ENCODE measurements at regions of chr5 and their contacts with region 1.

Region 1: GRCh38 chr5:87661784-87662566 is 249.2 kb upstream of the CCNH start:
- DNase-seq: no peak
- H3K4me3 Mint-ChIP-seq: no peak overlapping the region
- H3K27ac Mint-ChIP-seq: no peak overlapping the region
- H3K4me1 Mint-ChIP-seq: no peaks in the 10 kb centered on the region
- H3K27me3 Mint-ChIP-seq: peaks cover 35% of the 10 kb centered on the region
- CTCF ChIP-seq: no peak

Region 2: DNA sequence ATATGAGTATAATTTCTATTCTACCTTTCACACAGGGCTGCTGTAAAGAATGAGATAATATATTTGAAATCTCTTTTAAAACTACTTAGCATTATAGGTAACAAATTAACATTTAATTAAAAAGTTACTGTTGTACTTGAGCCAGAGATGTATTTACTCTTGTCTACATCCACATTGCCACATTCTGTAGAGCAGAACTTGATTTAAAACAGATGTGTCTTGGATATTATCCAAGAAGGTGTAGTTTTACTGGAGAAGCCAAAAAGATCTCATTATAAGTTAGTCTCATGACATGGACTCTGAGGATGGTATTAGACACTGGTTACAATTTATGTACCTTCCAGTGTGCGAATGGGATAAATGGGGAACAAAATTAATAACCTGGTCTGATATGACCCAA is 43.9 kb after region 1 on chr5:
- CTCF ChIA-PET with region 1: no interaction called
- POLR2A ChIA-PET with region 1: no interaction called
- intact Hi-C with region 1: loop called (anchors 1 kb)
- DNase-seq: no peak
- H3K4me3 Mint-ChIP-seq: no peak overlapping the region
- H3K27ac Mint-ChIP-seq: no peak overlapping the region
- H3K4me1 Mint-ChIP-seq: no peaks in the 10 kb centered on the region
- H3K27me3 Mint-ChIP-seq: peaks cover 44% of the 10 kb centered on the region
- CTCF ChIP-seq: no peak

Measured in MCF 10A (cell line).